BJ (cell line): ENCODE measurements at regions of chr7 and their contacts with region 1.

Region 1: DNA sequence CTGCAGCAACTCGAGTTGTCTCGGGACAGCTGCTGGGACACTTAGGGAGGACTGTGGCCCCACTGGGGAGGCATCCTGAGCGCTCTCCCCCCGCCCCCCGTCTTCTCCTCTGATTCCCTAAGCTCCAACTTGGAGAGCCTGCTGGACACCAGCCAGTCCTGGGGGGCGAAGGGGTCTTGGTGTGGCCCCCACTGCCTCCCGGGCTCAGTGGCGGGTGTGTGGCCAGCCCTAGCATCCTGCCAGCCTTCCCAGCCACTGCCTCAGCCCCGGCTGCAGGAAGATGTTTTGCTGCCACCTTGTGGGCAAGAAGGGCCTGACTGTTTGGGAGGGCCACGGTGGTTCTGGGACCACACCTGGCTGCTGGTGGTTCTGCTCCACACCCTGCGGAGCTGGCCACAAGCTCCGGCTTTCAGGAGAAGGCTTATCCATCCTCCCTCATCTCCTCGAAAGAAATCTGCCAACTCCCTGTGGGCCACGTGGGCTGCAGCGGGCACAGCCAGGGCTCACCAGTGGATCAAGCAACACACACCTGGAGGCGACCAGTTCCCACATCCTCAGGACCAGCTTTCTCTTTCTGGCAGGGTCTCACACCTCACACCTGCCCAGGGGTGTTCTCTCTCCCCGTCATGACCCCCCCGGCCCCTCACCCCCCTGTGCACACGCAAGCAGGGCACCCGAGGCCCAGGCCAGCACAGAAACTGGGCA is 24.8 kb downstream of the AGAP3 start:
- DNase-seq: no peak
- H3K4me3 ChIP-seq: no peak overlapping the region
- H3K27me3 ChIP-seq: no peaks in the 10 kb centered on the region
- CTCF ChIP-seq: peak; percentile 91

Region 2: GRCh38 chr7:150962553-150963399 is 148.3 kb before region 1 on chr7:
- CTCF ChIA-PET with region 1: interaction called, 12 read pairs
- POLR2A ChIA-PET with region 1: no interaction called
- DNase-seq: no peak
- H3K4me3 ChIP-seq: no peak overlapping the region
- H3K27me3 ChIP-seq: peaks cover 3% of the 10 kb centered on the region
- CTCF ChIP-seq: peak; percentile 92

Region 3: GRCh38 chr7:151008511-151009323 is 102.4 kb before region 1 on chr7:
- CTCF ChIA-PET with region 1: interaction called, 91 read pairs
- POLR2A ChIA-PET with region 1: no interaction called
- DNase-seq: no peak
- H3K4me3 ChIP-seq: no peak overlapping the region
- H3K27me3 ChIP-seq: peaks cover 2% of the 10 kb centered on the region
- CTCF ChIP-seq: peak; percentile 71

Region 4: DNA sequence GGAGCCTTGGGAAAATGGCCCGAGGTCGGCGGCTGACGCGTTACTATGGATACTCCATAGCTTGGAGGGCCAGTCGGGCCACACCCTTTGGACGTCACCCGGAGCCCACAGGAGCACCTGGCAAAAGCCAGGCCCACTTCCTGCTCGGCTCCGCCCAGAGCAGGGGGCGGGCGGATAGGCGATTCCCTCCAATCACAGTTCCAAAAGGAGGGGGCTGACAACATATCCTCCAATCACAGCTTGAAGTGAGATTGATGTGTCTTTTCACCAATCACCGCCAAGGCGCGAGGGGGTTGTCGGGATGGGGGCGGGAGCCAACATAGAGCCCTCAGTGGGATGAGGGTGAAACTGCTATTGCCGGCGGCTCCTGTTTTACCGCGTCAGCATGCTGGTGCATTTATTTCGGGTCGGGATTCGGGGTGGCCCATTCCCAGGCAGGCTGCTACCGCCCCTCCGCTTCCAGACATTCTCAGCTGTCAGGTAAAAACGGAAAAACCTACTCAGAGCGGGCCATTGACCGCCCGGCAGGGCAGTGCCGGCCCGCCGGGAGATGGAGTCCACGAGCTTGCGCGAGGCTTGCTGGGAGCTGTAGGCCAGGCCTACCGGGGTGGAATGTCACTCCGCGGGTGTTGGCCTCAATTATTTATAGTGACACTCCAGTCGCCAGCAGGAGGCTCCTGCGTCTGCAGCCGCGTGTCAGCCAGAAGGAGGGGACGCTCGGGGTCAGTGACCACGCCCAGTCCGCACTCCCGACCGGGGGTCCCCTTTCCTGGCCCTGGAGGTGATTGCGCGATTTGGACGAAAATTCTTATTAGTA is 82.8 kb before region 1 on chr7 and contains the start of gene ABCB8:
- CTCF ChIA-PET with region 1: interaction called, 15 read pairs
- POLR2A ChIA-PET with region 1: interaction called, 3 read pairs
- DNase-seq: peak; percentile 99
- H3K4me3 ChIP-seq: peak within 1 kb of the TSS; percentile 84
- H3K27me3 ChIP-seq: 0 out of 2 replicates have a peak, but pooled peaks cover 1% of the 10 kb centered on the region
- CTCF ChIP-seq: peak; percentile 50
- polyA plus RNA-seq, gene ABCB8: 13.0 and 23.6 TPM in 2 replicates

Region 5: DNA sequence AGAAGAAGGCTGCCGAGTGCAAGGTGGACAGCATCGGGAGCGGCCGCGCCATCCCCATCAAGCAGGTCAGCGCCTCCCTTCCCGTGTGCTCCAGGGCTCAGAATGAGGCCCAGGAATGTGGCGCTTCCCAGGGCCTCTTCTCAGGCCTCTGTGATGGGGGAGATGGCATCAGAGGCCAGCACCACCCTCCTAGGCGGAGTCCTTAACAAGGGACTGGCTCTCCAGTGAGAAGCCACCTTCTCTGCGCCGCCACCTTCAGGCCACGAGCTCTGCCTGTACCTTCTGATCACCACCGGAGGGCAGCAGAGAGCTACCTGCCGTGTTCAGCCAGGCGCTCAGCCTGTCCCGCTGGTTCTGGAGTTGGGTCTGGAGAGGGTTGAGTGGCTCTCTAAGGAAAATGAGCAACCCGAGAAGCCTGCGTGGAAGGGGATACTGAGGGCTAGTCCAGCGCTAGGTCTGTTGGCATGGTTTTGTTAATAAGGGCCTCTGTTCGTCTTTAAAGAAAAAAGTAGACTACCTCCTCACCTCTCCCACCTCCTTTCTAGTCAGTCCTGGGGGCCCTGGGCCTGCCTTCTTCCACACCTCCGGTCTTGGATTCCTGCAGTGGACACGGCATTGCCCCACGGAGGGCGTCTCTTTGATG is 12.8 kb after region 1 on chr7:
- CTCF ChIA-PET with region 1: interaction called, 36 read pairs
- POLR2A ChIA-PET with region 1: no interaction called
- DNase-seq: no peak
- H3K4me3 ChIP-seq: no peak overlapping the region
- H3K27me3 ChIP-seq: no peaks in the 10 kb centered on the region
- CTCF ChIP-seq: peak; percentile 99